PC-9 (cell line): ENCODE measurements at regions of chr11 and their contacts with region 1.

Region 1: DNA sequence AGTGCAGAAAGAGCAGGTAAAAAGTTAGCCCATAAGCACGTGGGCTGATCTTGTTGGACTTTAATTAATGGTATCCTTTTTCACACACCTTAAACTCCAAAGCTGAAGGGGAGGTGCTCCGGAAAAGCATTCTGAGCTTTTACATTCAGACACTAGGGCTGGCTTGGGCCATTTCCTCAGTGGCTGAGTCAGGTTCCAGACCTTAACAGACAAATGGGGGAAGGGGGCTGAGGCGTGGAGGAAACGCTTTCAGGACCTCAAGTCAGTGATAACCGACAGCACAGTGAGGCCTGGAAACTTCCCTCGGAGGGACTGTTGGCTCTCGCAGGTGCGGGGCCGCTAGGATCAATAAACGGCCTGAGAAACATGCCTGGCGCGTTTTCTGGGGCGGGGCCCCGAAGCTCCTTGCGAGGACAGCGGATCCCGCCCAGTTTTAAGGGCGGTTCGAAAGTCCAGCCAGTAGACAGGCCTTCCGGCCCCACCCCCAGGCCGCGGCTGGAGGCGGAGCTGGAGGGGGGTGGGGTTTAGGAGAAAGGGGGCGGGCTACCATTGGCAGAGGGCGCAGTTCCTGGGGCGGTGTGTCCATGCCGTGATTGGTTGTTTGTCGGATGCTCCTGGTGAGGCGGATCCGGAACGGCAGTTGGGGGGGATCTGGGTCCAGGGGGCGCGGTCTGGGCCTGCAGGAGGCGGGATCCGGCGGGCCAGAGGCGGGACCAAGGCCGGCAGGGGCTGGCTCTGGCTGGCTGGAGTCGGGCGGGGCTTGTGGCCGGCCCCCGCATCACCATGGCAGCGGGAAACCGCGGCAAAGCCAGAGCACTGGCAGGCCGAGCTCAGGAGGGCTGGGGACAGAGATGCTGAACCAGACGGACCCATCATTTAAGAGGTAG is 8.0 kb downstream of the C11orf52 start:
- DNase-seq: peak; percentile 93 to 98
- H3K4me3 ChIP-seq: peak overlapping the region; percentile 59
- H3K27ac ChIP-seq: peak overlapping the region; percentile 62
- H3K4me1 ChIP-seq: peaks cover 36% of the 10 kb centered on the region
- H3K27me3 ChIP-seq: no peaks in the 10 kb centered on the region
- CTCF ChIP-seq: no peak

Region 2: GRCh38 chr11:111905411-111905810 is 21.3 kb before region 1 on chr11:
- CTCF ChIA-PET with region 1: no interaction called
- POLR2A ChIA-PET with region 1: interaction called, 23 read pairs
- intact Hi-C with region 1: no loop called
- DNase-seq: no peak
- H3K4me3 ChIP-seq: no peak overlapping the region
- H3K27ac ChIP-seq: no peak overlapping the region
- H3K4me1 ChIP-seq: no peaks in the 10 kb centered on the region
- H3K27me3 ChIP-seq: no peaks in the 10 kb centered on the region
- CTCF ChIP-seq: no peak

Region 3: DNA sequence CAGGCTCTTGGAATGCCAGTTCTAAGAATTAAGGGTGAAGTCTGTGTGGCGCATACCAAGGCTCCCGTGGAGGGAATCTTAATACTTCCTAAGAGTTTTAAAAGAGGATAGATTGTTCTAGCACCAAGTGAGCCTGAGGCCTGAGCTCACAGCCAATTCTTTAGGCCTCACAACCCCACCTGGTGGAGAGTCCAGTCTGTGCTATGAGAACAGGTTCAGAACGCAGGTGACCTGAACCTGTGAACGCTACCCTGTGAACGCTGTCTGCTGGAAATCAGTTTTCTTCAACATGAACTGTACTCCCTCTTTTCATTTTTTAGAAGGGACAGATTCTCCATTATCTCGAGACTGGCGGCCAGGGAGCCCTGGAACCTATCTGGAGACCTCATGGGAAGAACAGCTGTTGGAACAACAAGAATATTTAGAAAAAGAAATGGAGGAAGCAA is 55.3 kb after region 1 on chr11:
- CTCF ChIA-PET with region 1: interaction called, 11 read pairs
- POLR2A ChIA-PET with region 1: interaction called, 7 read pairs
- intact Hi-C with region 1: loop called (anchors 2 kb)
- DNase-seq: peak; percentile 53 to 58
- H3K4me3 ChIP-seq: no peak overlapping the region
- H3K27ac ChIP-seq: no peak overlapping the region
- H3K4me1 ChIP-seq: 0 out of 2 replicates have a peak, but pooled peaks cover 4% of the 10 kb centered on the region
- H3K27me3 ChIP-seq: 0 out of 2 replicates have a peak, but pooled peaks cover 12% of the 10 kb centered on the region
- CTCF ChIP-seq: peak; percentile 86

Region 4: DNA sequence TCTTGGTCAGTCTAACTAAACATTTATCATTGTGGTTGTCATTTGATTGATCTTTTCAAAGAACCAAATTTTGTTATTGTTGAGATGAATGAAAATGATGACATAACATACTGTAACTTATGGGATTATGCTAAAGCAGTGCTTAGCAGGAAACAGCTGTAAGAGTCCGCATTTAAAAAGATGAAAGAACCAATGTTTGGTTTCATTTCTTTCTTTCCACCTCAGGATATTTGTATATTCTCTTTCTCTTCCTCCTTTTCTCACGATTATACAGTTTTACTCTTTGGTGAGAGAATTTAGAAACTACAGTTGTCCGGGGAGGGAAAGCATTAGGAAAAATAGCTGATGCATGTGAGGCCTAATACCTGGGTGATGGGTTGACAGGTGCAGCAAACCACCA is 124.0 kb after region 1 on chr11:
- CTCF ChIA-PET with region 1: interaction called, 3 read pairs
- POLR2A ChIA-PET with region 1: interaction called, 13 read pairs
- intact Hi-C with region 1: no loop called
- DNase-seq: no peak
- H3K4me3 ChIP-seq: no peak overlapping the region
- H3K27ac ChIP-seq: no peak overlapping the region
- H3K4me1 ChIP-seq: peaks cover 12% of the 10 kb centered on the region
- H3K27me3 ChIP-seq: no peaks in the 10 kb centered on the region
- CTCF ChIP-seq: no peak

Region 5: DNA sequence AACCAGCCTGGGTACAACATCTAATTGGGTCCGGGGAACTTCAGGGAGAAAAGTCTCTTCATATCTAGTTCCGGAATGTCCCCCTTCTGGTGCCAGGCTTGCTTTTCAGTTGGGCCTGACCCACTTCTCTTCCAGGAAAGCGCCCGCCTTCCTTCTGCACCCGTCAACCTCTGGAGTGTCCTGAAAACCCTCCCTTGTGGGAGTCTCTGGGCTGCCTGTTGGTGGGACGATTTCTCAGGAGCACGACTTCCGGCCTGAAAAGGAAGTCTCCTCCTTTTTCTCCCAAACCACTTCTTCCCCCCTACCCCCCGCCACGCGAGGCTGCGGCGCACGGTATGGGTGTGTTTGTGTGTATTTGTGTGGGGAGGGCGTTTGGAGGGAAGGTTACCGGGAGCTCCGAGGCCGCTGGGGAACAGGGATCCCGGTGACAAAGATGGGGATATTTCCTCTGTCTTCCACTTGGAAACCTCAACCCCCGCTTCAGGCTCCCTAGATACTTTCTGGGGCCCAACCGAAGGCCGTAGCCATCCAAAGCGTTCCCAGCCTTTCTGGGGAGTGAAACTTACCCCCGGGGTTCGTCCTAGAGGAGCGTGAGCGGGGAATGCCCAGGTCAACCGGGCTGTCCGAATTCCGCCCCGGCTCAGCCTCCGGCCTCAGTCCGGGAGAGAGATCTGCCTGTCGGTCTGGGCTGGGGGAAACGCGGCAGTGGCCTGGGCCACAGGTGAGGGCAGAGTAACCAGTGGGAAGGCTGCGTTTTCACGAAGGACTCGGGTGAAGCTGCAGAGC is 147.5 kb after region 1 on chr11 and contains the start of gene NKAPD1:
- CTCF ChIA-PET with region 1: no interaction called
- POLR2A ChIA-PET with region 1: no interaction called
- intact Hi-C with region 1: loop called (anchors 2 kb)
- DNase-seq: peak; percentile 63 to 84
- H3K4me3 ChIP-seq: peak within 1 kb of the TSS; percentile 98
- H3K27ac ChIP-seq: peak within 1 kb of the TSS; percentile 82
- H3K4me1 ChIP-seq: peaks cover 18% of the 10 kb centered on the region; the same call in 1 of the 2 replicates
- H3K27me3 ChIP-seq: no peaks in the 10 kb centered on the region
- CTCF ChIP-seq: 0 out of 2 replicates have a peak, but pooled peaks have one; percentile 17
- total RNA-seq, gene NKAPD1: 16.5 and 17.6 TPM in 2 replicates